ENCODE measurements at regions of chr9 and their contacts with region 1.

Region 1: DNA sequence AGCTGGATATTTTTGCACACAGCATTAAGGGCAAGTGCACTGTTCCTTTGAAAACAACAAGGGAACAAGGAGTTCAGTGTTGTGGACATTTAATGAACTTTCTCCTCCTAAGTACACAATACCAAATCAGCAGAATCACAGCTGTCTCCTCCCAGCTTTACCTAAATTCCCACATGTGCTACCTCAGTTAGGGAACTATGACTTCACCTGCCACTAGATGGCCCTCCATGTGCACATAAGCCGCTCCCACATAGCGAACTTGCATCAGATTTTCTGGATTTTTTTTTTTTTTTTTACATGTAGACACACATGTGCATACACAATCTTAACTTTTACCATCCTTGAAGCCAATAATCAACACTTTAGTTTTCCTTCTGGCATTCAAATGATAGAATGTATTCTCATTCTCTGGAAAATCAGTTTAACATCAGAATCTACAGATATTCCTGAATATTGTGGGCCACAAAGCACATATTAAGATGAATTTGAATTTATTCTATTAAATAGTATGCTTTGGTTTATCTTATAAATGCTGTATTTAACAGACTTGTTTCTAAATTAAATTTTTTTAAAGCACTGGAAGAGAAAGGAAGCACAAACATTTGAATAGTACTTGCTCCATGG is 123.6 kb downstream of the PALM2AKAP2 start:
- DNase-seq: no peak
- ATAC-seq: peak; percentile 64
- H3K4me3 ChIP-seq: no peak overlapping the region
- H3K27ac ChIP-seq: no peak overlapping the region
- H3K4me1 ChIP-seq: peaks cover 25% of the 10 kb centered on the region
- H3K27me3 ChIP-seq: no peaks in the 10 kb centered on the region
- CTCF ChIP-seq: peak; percentile 75 to 94 (median 91); a peak in 5 of 6 replicates
- EP300 ChIP-seq: no peak
- POLR2A ChIP-seq: no peak
- RAD21 ChIP-seq: peak; percentile 100

Region 2: GRCh38 chr9:109934857-109935215 is 31.2 kb after region 1 on chr9:
- CTCF ChIA-PET with region 1: interaction called, 4 read pairs
- POLR2A ChIA-PET with region 1: interaction called, 3 read pairs
- RAD21 ChIA-PET with region 1: interaction called, 13 read pairs
- SMC1A ChIA-PET with region 1: interaction called, 20 read pairs
- in situ Hi-C with region 1: no loop called
- intact Hi-C with region 1: no loop called
- DNase-seq: no peak
- ATAC-seq: no peak
- H3K4me3 ChIP-seq: no peak overlapping the region
- H3K27ac ChIP-seq: peak overlapping the region; percentile 17; the same call in 1 of the 2 replicates
- H3K4me1 ChIP-seq: peaks cover 23% of the 10 kb centered on the region
- H3K27me3 ChIP-seq: no peaks in the 10 kb centered on the region
- CTCF ChIP-seq: no peak
- EP300 ChIP-seq: no peak
- POLR2A ChIP-seq: no peak
- RAD21 ChIP-seq: no peak

Region 3: DNA sequence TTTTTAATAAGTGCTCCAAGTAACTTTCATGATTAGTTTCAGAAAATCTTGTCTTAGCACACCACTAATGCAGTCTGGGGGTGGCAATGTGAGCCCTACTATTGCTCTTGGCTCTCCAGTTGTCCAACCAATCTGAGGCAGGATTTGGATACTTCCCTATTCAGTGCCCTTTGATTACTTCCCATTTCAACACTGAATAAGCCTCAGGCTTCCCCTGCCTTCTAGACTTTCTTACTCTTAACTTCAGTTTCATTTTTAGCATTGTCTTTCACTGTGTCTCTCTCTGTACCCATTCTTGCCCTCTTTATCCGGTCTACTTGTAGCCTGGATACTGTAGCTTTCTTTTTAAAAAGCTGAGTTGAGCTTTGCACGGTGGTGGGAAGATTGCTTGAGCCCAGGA is 118.3 kb after region 1 on chr9:
- CTCF ChIA-PET with region 1: interaction called, 4 read pairs
- POLR2A ChIA-PET with region 1: no interaction called
- RAD21 ChIA-PET with region 1: interaction called, 11 read pairs
- SMC1A ChIA-PET with region 1: interaction called, 4 read pairs
- in situ Hi-C with region 1: no loop called
- intact Hi-C with region 1: no loop called
- DNase-seq: peak; percentile 60
- ATAC-seq: peak; percentile 99
- H3K4me3 ChIP-seq: no peak overlapping the region
- H3K27ac ChIP-seq: peak overlapping the region; percentile 4; the same call in 1 of the 2 replicates
- H3K4me1 ChIP-seq: peaks cover 8% of the 10 kb centered on the region
- H3K27me3 ChIP-seq: no peaks in the 10 kb centered on the region
- CTCF ChIP-seq: no peak
- EP300 ChIP-seq: no peak
- POLR2A ChIP-seq: no peak
- RAD21 ChIP-seq: no peak

Region 4: DNA sequence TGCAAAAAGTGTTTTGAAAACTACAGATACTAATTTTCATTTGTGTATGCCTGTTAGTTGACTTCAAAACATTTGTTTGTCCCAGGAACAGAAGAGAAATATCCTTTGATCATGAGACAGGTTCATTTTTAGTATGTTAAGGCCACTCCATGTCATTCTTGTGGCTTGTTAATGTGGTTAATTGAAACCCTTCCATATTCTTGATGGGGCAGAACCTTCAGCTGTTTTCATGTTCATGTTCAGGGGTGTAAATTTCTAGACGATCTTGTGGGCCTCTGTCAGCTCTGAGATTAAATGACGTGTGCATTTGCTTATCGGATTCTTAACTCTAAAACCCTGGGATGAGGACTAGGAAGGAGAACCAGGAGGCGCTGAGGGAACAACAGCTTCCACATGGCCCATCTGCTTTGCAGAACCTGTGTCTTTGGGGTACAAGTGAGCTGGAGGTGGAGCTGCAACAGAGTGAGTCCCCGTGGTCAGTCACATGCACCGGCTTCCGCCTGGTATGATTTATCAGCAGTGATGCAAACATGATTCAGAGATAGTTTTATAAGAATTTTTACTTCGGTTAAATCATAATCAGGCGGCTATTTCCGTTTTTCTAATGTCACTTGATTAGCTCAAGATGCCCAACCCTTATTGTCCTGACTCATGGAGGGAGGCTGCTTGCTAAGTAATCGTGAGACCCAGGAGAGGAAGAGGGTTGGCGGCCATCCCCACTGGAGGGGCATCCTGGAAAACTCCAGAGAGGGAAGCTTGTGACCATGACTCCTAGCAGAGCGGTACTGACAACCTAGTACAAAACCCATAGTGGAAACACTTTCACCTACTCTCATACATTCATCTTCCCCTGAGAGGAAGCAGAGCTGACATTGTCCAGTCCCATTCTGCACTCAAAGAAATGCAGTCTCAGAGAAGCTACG is 166.0 kb after region 1 on chr9:
- CTCF ChIA-PET with region 1: interaction called, 537 read pairs
- POLR2A ChIA-PET with region 1: interaction called, 3 read pairs
- RAD21 ChIA-PET with region 1: interaction called, 8 read pairs
- SMC1A ChIA-PET with region 1: interaction called, 636 read pairs
- in situ Hi-C with region 1: no loop called
- intact Hi-C with region 1: no loop called
- DNase-seq: no peak
- ATAC-seq: no peak
- H3K4me3 ChIP-seq: no peak overlapping the region
- H3K27ac ChIP-seq: no peak overlapping the region
- H3K4me1 ChIP-seq: peaks cover 29% of the 10 kb centered on the region
- H3K27me3 ChIP-seq: no peaks in the 10 kb centered on the region
- CTCF ChIP-seq: no peak
- EP300 ChIP-seq: no peak
- POLR2A ChIP-seq: no peak
- RAD21 ChIP-seq: no peak

Region 5: DNA sequence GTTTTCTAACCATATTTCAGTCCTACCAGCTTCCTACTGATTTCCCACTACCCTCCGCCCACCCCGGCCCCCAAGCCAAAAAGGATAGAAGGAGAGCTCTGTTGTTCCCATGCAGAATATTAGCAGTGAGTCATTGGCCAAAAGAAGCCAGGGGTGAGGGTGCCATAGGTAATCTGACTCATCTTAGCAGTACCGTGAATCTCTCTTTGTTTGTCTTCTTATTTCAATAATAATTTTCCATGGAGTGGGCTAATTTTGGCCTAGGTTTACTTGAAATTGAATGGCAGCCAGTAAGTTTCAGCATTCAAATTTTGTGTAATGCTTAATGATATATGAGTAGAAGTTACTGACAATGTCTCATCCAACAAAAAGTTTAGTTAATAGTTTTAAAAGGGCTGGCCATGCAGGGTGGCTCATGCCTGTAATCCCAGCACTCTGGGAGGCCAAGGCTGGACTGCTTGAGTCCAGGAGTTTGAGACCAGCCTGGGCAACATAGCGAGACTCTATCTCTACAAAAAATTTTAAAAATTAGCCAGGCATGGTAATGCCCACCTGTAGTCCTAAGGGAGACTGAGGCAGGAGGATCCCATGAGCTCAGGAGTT is 230.1 kb after region 1 on chr9:
- CTCF ChIA-PET with region 1: interaction called, 19 read pairs
- POLR2A ChIA-PET with region 1: interaction called, 7 read pairs
- RAD21 ChIA-PET with region 1: interaction called, 28 read pairs
- SMC1A ChIA-PET with region 1: interaction called, 101 read pairs
- in situ Hi-C with region 1: no loop called
- intact Hi-C with region 1: no loop called
- DNase-seq: no peak
- ATAC-seq: no peak
- H3K4me3 ChIP-seq: no peak overlapping the region
- H3K27ac ChIP-seq: no peak overlapping the region
- H3K4me1 ChIP-seq: peaks cover 36% of the 10 kb centered on the region
- H3K27me3 ChIP-seq: no peaks in the 10 kb centered on the region
- CTCF ChIP-seq: no peak
- EP300 ChIP-seq: no peak
- POLR2A ChIP-seq: no peak
- RAD21 ChIP-seq: no peak

Region 6: DNA sequence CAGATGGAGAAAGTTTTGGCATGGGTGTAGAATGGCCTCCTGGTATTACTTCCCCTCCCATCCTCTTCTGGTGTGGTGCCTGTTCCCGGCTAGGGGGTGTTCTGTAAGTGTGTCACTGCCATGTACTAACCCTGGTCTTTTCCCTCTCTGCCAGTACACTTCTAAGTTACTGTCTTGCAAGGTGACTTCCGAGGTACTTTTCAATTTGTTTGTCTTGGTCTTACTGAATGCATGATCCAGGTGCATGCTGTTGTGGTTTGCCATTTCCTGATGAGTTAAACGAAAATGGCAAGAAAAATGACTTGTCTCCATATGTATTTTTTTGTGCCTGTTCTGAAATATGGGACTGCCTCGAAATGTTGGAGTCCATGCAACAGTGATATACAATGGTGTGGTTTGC is 258.3 kb after region 1 on chr9:
- CTCF ChIA-PET with region 1: interaction called, 17 read pairs
- POLR2A ChIA-PET with region 1: no interaction called
- RAD21 ChIA-PET with region 1: interaction called, 424 read pairs
- SMC1A ChIA-PET with region 1: interaction called, 406 read pairs
- in situ Hi-C with region 1: no loop called
- intact Hi-C with region 1: no loop called
- DNase-seq: no peak
- ATAC-seq: peak; percentile 59
- H3K4me3 ChIP-seq: no peak overlapping the region
- H3K27ac ChIP-seq: no peak overlapping the region; the same call in 1 of the 2 replicates
- H3K4me1 ChIP-seq: peaks cover 39% of the 10 kb centered on the region
- H3K27me3 ChIP-seq: no peaks in the 10 kb centered on the region
- CTCF ChIP-seq: no peak
- EP300 ChIP-seq: 0 out of 4 replicates have a peak, but pooled peaks of 1 of the 2 experiments have one; percentile 12
- POLR2A ChIP-seq: no peak
- RAD21 ChIP-seq: no peak